Left cardiac atrium (tissue), 4 donors: ENCODE measurements at regions of chr4 and their contacts with region 1.

Region 1: DNA sequence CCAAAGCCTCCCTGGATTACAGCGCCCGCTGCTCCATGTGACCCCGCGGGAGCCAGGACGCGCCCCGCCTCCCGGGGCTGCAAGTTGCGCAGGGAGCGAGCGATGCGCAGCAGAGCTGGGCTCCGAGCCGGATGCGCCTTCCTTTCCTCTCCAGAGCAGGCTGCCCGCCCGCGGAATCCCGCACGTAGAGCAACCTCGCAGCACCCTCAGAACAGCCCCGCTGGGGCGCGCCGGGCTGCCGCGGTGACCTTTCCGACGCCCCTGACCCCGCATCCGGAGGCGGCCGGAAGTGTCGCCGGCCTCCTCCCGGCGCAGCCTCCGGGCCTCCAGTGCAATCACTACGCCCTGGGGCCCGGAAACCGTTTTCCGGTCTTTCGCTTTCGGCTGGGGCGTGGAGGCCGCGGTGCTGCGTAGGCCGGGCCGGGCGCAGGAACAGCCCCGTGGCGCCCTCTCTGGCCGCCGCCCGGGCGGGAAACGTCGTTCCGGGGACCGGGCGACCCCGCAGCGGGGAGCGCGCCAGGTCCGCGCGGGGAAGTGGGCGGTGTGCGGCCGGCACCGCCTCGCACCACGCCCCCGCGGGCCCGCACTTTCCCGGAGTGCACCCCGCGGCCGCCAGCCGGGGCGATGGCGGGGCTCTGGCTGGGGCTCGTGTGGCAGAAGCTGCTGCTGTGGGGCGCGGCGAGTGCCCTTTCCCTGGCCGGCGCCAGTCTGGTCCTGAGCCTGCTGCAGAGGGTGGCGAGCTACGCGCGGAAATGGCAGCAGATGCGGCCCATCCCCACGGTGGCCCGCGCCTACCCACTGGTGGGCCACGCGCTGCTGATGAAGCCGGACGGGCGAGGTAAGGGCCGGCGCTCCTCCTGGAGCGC is at the start of gene CYP4V2:
- DNase-seq: peak; percentile 85
- ATAC-seq: peak; percentile 87 to 91
- total RNA-seq, gene CYP4V2: 26.6 to 32.7 TPM

Region 2: GRCh38 chr4:186144956-186145569 is 46.4 kb before region 1 on chr4:
- intact Hi-C with region 1: loop called in 1 of 2 experiments (anchors 5 kb)
- DNase-seq: peak; percentile 65
- ATAC-seq: peak; percentile 66 to 77

Region 3: GRCh38 chr4:186927624-186928023 is 736.2 kb after region 1 on chr4:
- intact Hi-C with region 1: no loop called
- DNase-seq: no peak
- ATAC-seq: no peak